BJ (cell line): ENCODE measurements at regions of chr1 and their contacts with region 1.

Region 1: GRCh38 chr1:48202030-48202752 is 20.3 kb upstream of the SLC5A9 start:
- DNase-seq: peak; percentile 74
- H3K4me3 ChIP-seq: no peak overlapping the region
- H3K27me3 ChIP-seq: peaks cover 2% of the 10 kb centered on the region; the same call in 1 of the 2 replicates
- CTCF ChIP-seq: peak; percentile 84

Region 2: GRCh38 chr1:48109390-48110013 is 92.7 kb before region 1 on chr1:
- CTCF ChIA-PET with region 1: interaction called, 22 read pairs
- POLR2A ChIA-PET with region 1: no interaction called
- DNase-seq: peak; percentile 3
- H3K4me3 ChIP-seq: no peak overlapping the region
- H3K27me3 ChIP-seq: no peaks in the 10 kb centered on the region
- CTCF ChIP-seq: peak; percentile 84

Region 3: DNA sequence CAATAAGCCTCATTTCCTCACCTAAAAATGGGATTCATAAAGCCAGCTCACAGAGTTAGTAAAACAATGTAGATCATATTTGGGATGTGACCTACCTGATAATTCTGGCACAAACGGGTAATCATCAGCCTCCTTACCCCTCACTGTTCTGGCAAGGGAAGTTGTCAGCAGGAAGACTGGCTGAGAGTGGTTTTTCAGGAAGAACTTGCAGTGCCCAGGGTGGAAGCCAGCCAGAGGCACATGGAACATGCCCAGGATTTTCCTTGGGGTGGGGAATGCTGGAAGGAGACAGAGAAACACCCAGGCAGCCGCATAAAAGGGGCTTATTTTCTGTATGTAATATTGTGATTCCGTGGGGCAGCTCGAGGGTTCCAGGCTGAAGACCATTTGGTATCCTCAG is 12.6 kb after region 1 on chr1:
- CTCF ChIA-PET with region 1: interaction called, 12 read pairs
- POLR2A ChIA-PET with region 1: no interaction called
- DNase-seq: no peak
- H3K4me3 ChIP-seq: no peak overlapping the region
- H3K27me3 ChIP-seq: no peaks in the 10 kb centered on the region
- CTCF ChIP-seq: no peak